GM13976 (cell line): ENCODE measurements at regions of chr18 and their contacts with region 1.

Region 1: GRCh38 chr18:79532328-79533007 is 136.7 kb downstream of the NFATC1 start:
- DNase-seq: no peak
- CTCF ChIP-seq: no peak

Region 2: GRCh38 chr18:79378542-79379250 is 153.8 kb before region 1 on chr18:
- in situ Hi-C with region 1: loop called (anchors 10 kb)
- DNase-seq: peak; percentile 90
- CTCF ChIP-seq: peak; percentile 96

Region 3: DNA sequence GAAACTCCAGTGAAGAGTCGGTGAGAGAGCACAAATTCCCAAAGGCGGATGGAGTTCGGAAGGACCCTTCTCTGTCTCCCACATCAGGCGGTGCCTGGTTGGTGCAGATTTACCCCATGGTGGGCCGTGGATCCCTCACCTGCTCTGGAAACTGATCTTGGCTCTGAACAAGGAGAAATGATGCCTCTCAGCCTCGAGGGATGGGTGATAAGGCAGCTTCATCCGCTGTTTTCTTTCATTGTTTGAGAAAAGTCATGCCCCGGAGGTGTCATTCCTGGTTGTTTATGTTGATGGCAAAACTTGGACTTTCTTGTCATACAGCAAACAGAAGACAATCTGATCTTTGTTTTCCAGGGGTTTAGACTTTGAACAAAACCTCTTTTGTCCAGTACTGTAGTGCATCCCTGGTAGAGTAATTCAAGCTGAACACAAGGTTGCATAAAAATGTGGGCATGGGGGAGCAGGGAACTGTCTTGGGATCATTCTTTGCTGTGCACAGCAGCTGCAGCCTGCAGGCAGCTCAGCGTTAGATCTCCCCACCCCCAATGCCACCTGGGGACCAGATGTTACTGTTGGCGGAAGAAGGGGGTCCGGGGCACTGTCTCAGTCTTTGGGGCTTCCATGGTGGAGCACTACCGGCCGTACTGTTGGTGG is 55.4 kb before region 1 on chr18:
- in situ Hi-C with region 1: no loop called
- DNase-seq: no peak
- CTCF ChIP-seq: no peak

Region 4: GRCh38 chr18:79644006-79644665 is 111.7 kb after region 1 on chr18:
- in situ Hi-C with region 1: loop called (anchors 10 kb)
- DNase-seq: peak; percentile 93
- CTCF ChIP-seq: peak; percentile 89